ENCODE measurements at regions of chr1 and their contacts with region 1.

Region 1: GRCh38 chr1:1059494-1060280 is 14.4 kb downstream of the RNF223 start:
- DNase-seq: peak; percentile 91
- H3K4me3 ChIP-seq: peak overlapping the region; percentile 17 to 59 (median 52)
- H3K27ac ChIP-seq: no peak overlapping the region
- H3K4me1 ChIP-seq: peaks cover 0 to 29% (median 22%) of the 10 kb centered on the region in 4 donors
- H3K27me3 ChIP-seq: peaks cover 48 to 81% (median 78%) of the 10 kb centered on the region in 3 donors
- CTCF ChIP-seq: no peak
- EP300 ChIP-seq: no peak
- POLR2A ChIP-seq: no peak

Region 2: DNA sequence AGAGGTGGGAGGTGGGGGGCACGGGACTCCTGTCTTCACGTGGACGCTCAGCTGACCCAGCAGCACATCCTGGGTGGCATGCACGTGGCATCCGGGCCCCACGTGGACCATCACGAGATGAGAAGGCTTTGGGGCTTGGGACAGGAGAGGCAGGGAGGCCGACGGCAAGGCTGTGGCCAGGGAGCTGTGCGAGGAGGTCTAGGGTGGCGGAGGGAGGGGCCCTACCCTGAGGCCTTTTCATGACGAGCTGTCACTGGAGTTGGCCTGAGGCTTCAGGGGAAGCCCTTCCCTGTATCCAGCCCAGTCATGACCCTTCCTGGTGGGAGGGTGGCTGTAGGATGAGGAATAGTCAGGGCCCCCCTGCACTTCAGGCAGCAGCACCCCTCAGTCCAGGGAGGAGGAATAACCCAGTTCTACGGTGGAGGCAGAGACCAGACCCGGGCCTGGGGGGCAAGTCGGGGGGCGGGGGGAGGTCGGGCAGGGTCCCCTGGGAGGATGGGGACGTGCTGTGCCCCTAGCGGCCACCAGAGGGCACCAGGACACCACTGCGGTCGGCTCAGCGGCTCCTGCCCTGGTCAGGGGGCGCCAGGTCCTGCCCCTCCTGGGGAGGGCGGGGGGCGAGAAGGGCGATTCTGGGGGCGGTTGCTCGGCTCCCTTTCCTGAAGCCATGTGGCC is 75.8 kb before region 1 on chr1:
- intact Hi-C with region 1: loop called (anchors 2 kb)
- DNase-seq: peak; percentile 71
- H3K4me3 ChIP-seq: no peak overlapping the region
- H3K27ac ChIP-seq: no peak overlapping the region
- H3K4me1 ChIP-seq: peaks cover 0 to 6% (median 3%) of the 10 kb centered on the region in 4 donors
- H3K27me3 ChIP-seq: peaks cover 0 to 32% (median 13%) of the 10 kb centered on the region in 3 donors
- CTCF ChIP-seq: peak; percentile 48 to 98 (median 58)
- EP300 ChIP-seq: no peak
- POLR2A ChIP-seq: no peak

Region 3: DNA sequence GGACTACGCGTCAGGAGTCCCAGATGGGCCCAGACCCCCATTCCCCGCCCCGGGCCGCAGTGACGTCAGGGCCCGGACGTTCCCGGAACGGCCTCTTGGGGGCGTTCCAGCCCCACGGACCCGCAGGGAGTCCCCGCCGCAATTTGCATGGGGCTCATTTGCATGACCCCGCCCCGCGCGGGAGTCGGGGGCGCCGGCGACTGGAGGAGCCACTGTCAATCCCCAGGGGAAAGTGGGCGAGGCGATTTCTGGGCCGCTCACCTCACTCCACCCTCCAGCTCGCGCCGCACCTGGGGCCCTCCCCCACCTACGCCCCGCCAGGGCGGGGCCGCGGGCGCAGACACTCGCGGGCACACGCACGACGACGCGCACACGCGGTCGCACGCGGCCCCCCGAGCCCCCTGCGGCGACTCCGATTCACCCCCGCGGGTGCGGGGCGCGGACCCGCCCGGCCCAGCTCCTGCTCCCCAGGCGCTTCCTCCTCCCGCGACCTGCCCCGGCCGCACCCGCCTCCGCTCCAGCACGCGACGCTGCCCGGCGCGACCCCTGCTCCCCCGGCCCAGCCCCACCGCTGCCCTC is 26.6 kb before region 1 on chr1:
- intact Hi-C with region 1: loop called (anchors 1 kb)
- DNase-seq: peak; percentile 88
- H3K4me3 ChIP-seq: peak overlapping the region in 3 of 4 donors; percentile 35 to 55 (median 54)
- H3K27ac ChIP-seq: no peak overlapping the region
- H3K4me1 ChIP-seq: peaks cover 0 to 24% (median 21%) of the 10 kb centered on the region in 4 donors
- H3K27me3 ChIP-seq: peaks cover 25 to 56% (median 28%) of the 10 kb centered on the region in 3 donors
- CTCF ChIP-seq: peak in 3 of 4 experiments; percentile 51 to 72 (median 53)
- EP300 ChIP-seq: no peak
- POLR2A ChIP-seq: no peak

Measured in sigmoid colon (tissue), 7 donors.